Heart right ventricle (tissue), 16 donors: ENCODE measurements at regions of chr14 and their contacts with region 1.

Region 1: GRCh38 chr14:81990312-81990761 is 456.7 kb upstream of the SEL1L start:
- DNase-seq: peak in 1 of 2 donors; percentile 20
- ATAC-seq: peak in 2 of 8 donors; percentile 34 to 37
- H3K4me3 ChIP-seq: no peak overlapping the region
- H3K27ac ChIP-seq: no peak overlapping the region
- H3K4me1 ChIP-seq: no peaks in the 10 kb centered on the region
- H3K27me3 ChIP-seq: peaks cover 0 to 18% (median 0%) of the 10 kb centered on the region in 7 donors
- CTCF ChIP-seq: peak; percentile 60 to 92 (median 86)

Region 2: DNA sequence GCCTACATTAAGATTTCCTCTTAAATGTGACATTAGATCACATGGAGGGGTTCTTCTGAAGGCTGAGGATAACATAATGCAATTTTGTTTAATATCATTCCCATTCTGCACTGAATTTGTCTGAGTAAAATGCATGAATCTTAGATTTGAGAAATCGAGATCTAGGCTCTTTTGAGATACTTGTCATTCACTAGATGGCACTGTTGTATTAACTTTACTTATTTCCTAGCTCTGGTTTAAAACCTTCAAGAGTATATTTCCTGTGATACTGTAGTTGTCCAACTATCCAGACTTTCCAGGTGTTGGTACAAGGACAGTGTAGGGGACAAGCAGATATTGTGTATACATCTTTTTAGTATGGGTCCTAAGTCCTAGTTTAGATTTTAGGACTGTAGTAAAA is 365.0 kb before region 1 on chr14:
- intact Hi-C with region 1: loop called in 1 of 10 experiments (anchors 5 kb)
- DNase-seq: no peak
- ATAC-seq: peak in 4 of 8 donors; percentile 47 to 53 (median 50)
- H3K4me3 ChIP-seq: no peak overlapping the region
- H3K27ac ChIP-seq: no peak overlapping the region
- H3K4me1 ChIP-seq: no peaks in the 10 kb centered on the region
- H3K27me3 ChIP-seq: no peaks in the 10 kb centered on the region
- CTCF ChIP-seq: peak in 7 of 9 donors; percentile 31 to 68 (median 61)

Region 3: GRCh38 chr14:81710234-81710845 is 280.0 kb before region 1 on chr14:
- intact Hi-C with region 1: loop called in 3 of 10 experiments (anchors 5 to 10 kb)
- DNase-seq: peak in 1 of 2 donors; percentile 8
- ATAC-seq: peak in 1 of 8 donors; percentile 57
- H3K4me3 ChIP-seq: no peak overlapping the region
- H3K27ac ChIP-seq: no peak overlapping the region
- H3K4me1 ChIP-seq: no peaks in the 10 kb centered on the region
- H3K27me3 ChIP-seq: peaks cover 0 to 4% (median 0%) of the 10 kb centered on the region in 7 donors
- CTCF ChIP-seq: peak; percentile 18 to 72 (median 63)

Region 4: GRCh38 chr14:82009076-82009475 is 18.7 kb after region 1 on chr14:
- intact Hi-C with region 1: no loop called
- DNase-seq: no peak
- ATAC-seq: no peak
- H3K4me3 ChIP-seq: no peak overlapping the region
- H3K27ac ChIP-seq: no peak overlapping the region
- H3K4me1 ChIP-seq: no peaks in the 10 kb centered on the region
- H3K27me3 ChIP-seq: no peaks in the 10 kb centered on the region
- CTCF ChIP-seq: peak in 3 of 9 donors; percentile 9 to 24 (median 21)